ENCODE measurements at regions of chr5 and their contacts with region 1.

Region 1: GRCh38 chr5:163369776-163370385 is 67.5 kb upstream of the CCNG1 start:
- DNase-seq: no peak
- H3K4me3 ChIP-seq: no peak overlapping the region
- H3K27ac ChIP-seq: no peak overlapping the region
- H3K4me1 ChIP-seq: no peaks in the 10 kb centered on the region
- H3K27me3 ChIP-seq: no peaks in the 10 kb centered on the region
- CTCF ChIP-seq: no peak
- POLR2A ChIP-seq: no peak

Region 2: DNA sequence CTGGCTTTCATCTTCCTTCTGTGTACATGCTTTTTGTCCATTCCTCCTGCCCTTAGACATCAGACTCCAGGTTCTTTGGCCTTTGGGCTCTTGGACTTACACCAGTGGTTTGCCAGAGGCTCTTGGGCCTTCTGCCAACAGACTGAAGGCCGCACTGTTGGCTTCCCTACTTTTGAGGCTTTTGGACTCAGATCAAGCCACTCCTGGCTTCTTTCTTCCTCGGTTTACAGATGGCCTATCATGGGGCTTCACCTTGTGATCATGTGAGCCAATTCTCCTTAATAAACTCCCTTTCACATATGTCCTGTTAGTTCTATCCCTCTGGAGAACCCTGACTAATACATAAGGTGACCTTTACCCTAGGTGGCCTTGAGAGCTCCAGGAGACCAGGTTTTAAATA is 121.5 kb before region 1 on chr5:
- intact Hi-C with region 1: no loop called
- DNase-seq: no peak
- H3K4me3 ChIP-seq: no peak overlapping the region
- H3K27ac ChIP-seq: no peak overlapping the region
- H3K4me1 ChIP-seq: no peaks in the 10 kb centered on the region
- H3K27me3 ChIP-seq: no peaks in the 10 kb centered on the region
- CTCF ChIP-seq: no peak
- POLR2A ChIP-seq: no peak

Region 3: DNA sequence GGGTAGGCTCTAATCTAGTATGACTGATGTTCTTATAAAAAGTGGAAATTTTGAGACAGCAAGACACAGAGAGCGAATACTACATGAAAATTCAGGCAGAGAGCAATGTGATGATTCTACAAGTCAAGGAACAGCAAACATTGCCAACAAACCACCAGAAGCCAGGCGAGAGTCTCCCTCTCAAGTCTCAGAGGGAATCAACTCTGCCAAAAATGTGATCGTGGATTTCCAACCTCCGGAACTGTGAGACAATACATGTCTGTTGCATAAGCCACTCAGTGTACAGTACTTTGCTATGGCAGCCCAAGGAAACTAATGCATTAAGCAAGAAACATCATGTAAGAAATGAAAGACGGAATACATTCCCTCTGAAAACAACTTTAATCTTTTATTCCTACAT is 15.4 kb after region 1 on chr5:
- intact Hi-C with region 1: loop called (anchors 1 kb)
- DNase-seq: no peak
- H3K4me3 ChIP-seq: no peak overlapping the region
- H3K27ac ChIP-seq: no peak overlapping the region
- H3K4me1 ChIP-seq: peaks cover 3% of the 10 kb centered on the region
- H3K27me3 ChIP-seq: no peaks in the 10 kb centered on the region
- CTCF ChIP-seq: no peak
- POLR2A ChIP-seq: no peak

Region 4: GRCh38 chr5:163894645-163895044 is 524.8 kb after region 1 on chr5:
- intact Hi-C with region 1: no loop called
- DNase-seq: no peak
- H3K4me3 ChIP-seq: no peak overlapping the region
- H3K27ac ChIP-seq: no peak overlapping the region
- H3K4me1 ChIP-seq: no peaks in the 10 kb centered on the region
- H3K27me3 ChIP-seq: no peaks in the 10 kb centered on the region
- CTCF ChIP-seq: no peak
- POLR2A ChIP-seq: no peak

Measured in testis (tissue), 5 donors.